ENCODE measurements at regions of chr22 and their contacts with region 1.

Region 1: GRCh38 chr22:29780748-29781676 is 13.8 kb downstream of the UQCR10 start:
- DNase-seq: no peak

Region 2: GRCh38 chr22:29553351-29554224 is 227.4 kb before region 1 on chr22 and contains the start of gene THOC5:
- intact Hi-C with region 1: no loop called
- DNase-seq: peak; percentile 97
- total RNA-seq, gene THOC5: 37.0 TPM

Region 3: DNA sequence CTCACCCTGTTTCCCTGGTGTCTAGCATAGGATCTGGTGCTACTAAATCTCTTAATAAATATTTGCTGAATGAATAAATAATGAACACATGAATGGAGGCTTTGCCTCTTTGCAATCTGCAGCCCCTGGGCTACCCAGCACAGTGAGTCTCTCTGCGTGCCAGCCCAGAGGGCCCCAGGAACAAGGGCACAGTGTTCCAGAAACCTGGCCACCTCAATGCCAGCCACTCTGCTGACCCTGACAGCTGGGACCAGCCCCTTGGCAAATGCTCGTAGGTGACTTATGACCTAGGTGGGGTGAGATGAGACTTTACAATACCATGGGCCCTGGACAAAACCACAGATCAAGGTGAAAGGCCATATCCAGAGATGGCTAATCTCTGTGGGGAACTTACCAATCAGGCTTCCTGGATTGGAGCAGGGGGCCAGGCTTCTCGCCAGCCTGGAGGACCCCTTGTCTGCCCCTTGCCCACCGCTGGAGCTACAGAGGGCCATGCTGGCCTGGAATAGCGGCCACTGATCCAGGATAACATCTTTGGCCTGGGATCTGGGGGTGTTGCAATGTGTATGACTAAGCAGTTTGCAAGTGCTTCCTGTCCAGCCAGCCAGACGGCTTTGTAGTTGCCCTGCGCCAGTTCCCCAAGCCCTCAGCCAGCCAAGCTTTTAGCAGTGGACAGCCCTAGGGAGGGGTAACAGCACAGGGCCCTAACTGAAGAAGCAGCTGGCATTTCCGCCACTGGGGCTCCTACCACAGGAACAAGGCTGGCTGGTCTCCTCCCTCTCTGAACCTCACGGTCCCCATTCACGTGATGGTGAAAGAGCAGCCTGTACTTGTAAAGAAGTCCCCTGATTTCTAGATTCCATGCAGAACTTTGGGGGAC is 18.0 kb after region 1 on chr22:
- intact Hi-C with region 1: loop called (anchors 2 kb)
- DNase-seq: peak; percentile 94

Region 4: GRCh38 chr22:29820961-29821789 is 40.2 kb after region 1 on chr22:
- intact Hi-C with region 1: loop called (anchors 1 kb)
- DNase-seq: peak; percentile 86

Region 5: GRCh38 chr22:29830585-29830984 is 49.6 kb after region 1 on chr22:
- intact Hi-C with region 1: loop called (anchors 2 kb)
- DNase-seq: peak; percentile 81